ENCODE measurements at regions of chr1 and their contacts with region 1.

Region 1: GRCh38 chr1:56709269-56709880 is 64.3 kb downstream of the PRKAA2 start:
- DNase-seq: peak; percentile 38
- H3K4me3 ChIP-seq: no peak overlapping the region
- H3K27ac ChIP-seq: no peak overlapping the region
- H3K4me1 ChIP-seq: peaks cover 3% of the 10 kb centered on the region
- H3K27me3 ChIP-seq: no peaks in the 10 kb centered on the region
- CTCF ChIP-seq: peak; percentile 52 to 54

Region 2: DNA sequence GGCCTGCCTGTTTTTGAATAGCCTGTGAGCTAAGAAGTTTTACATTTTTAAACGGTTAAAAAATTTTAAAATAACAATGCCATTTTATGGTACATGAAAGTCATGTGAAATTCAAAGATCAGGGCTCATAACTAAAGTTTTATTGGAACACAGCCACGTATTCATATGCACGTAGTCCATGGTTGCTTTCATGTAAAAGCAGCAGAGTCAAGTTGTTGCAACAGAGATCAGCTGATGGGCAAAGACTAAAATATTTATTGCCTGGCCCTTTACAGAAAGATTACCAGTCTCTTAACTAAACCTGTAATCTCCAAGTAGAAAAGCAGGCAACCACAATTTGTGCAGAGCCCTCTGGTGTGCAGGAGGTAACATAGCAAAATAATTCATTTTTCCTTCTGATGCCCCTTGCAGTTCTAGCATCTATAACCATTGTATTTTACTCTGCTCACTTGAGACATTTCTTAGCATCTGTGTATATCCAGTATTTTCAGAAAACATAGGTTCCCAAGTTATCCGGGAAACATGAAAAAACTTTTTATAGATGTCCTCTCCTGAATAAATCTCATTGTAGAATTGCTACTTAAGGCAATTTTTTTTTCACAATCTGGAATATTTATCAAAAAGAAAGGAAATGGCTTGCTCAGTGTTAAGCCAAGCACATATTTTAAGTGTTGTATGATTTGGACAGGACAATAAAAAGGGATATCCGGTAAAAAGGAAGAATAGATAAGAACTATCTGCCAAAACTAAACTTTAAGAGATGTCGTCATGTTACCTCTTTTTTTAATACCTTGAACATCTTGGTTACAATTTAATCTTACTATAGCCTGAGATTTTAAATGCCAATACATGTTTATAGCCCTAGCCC is 560.8 kb before region 1 on chr1:
- CTCF ChIA-PET with region 1: no interaction called
- dilution Hi-C with region 1: no loop called
- in situ Hi-C with region 1: no loop called
- intact Hi-C with region 1: no loop called
- DNase-seq: no peak
- H3K4me3 ChIP-seq: no peak overlapping the region
- H3K27ac ChIP-seq: no peak overlapping the region
- H3K4me1 ChIP-seq: no peaks in the 10 kb centered on the region
- H3K27me3 ChIP-seq: no peaks in the 10 kb centered on the region
- CTCF ChIP-seq: peak; percentile 4 to 6

Region 3: GRCh38 chr1:56409094-56409691 is 300.2 kb before region 1 on chr1:
- CTCF ChIA-PET with region 1: no interaction called
- dilution Hi-C with region 1: no loop called
- in situ Hi-C with region 1: no loop called
- intact Hi-C with region 1: loop called (anchors 2 kb)
- DNase-seq: peak; percentile 27
- H3K4me3 ChIP-seq: no peak overlapping the region
- H3K27ac ChIP-seq: no peak overlapping the region
- H3K4me1 ChIP-seq: no peaks in the 10 kb centered on the region
- H3K27me3 ChIP-seq: no peaks in the 10 kb centered on the region
- CTCF ChIP-seq: peak; percentile 62 to 83

Region 4: DNA sequence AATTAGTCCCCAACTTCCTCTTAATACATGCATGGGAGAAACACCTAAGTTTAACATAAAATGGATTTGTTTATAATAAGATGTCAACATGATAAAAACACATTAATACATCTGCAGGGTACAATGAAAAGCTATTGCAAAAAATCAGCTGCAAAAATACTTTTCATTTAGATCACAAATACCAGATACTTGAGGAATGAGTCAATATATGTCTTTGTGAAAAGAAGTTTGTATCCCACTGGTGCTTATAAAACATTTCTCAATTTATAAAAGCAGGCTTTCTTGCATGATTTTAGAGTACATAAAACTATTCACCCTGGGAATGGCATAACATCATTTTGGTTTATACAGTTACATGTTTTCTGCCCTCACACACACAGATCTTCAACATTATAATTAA is 82.8 kb before region 1 on chr1:
- CTCF ChIA-PET with region 1: no interaction called
- dilution Hi-C with region 1: no loop called
- in situ Hi-C with region 1: no loop called
- intact Hi-C with region 1: no loop called
- DNase-seq: no peak
- H3K4me3 ChIP-seq: no peak overlapping the region
- H3K27ac ChIP-seq: no peak overlapping the region
- H3K4me1 ChIP-seq: no peaks in the 10 kb centered on the region
- H3K27me3 ChIP-seq: no peaks in the 10 kb centered on the region
- CTCF ChIP-seq: no peak

Region 5: DNA sequence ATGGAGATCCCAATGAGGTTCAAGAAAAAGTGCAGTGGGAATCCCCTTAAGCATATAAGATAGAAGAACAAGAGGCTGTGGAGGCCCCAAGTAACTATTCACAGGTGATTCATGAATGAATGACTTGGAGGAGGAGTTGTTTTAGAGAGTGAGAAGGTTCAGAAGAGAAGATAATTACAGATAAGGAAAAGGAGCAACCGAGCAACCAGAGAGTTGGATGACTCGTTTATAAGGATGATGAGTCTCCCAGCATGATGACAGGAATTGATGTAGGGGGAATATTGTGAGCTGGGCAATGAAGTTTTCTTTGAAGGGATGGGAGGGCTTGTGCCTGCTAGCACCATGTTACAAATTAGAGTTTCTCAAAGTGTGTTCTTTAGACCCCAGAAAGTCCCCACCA is 155.1 kb after region 1 on chr1:
- CTCF ChIA-PET with region 1: no interaction called
- dilution Hi-C with region 1: no loop called
- in situ Hi-C with region 1: no loop called
- intact Hi-C with region 1: no loop called
- DNase-seq: peak; percentile 11
- H3K4me3 ChIP-seq: no peak overlapping the region
- H3K27ac ChIP-seq: no peak overlapping the region
- H3K4me1 ChIP-seq: peaks cover 5% of the 10 kb centered on the region
- H3K27me3 ChIP-seq: peaks cover 4% of the 10 kb centered on the region
- CTCF ChIP-seq: no peak

Measured in mammary epithelial cell (primary cell).